ENCODE measurements at regions of chr9 and their contacts with region 1.

Region 1: GRCh38 chr9:6055213-6055612 is 39.8 kb upstream of the RANBP6 start:
- DNase-seq: no peak
- ATAC-seq: peak; percentile 92

Region 2: GRCh38 chr9:5886114-5886939 is 168.9 kb before region 1 on chr9:
- intact Hi-C with region 1: loop called in 1 of 2 experiments (anchors 2 kb)
- DNase-seq: peak; percentile 58 to 85
- ATAC-seq: peak; percentile 89

Region 3: GRCh38 chr9:6008169-6008979 is 46.8 kb before region 1 on chr9:
- intact Hi-C with region 1: no loop called
- DNase-seq: peak; percentile 94 to 98
- ATAC-seq: peak; percentile 83

Region 4: GRCh38 chr9:6126374-6126773 is 71.2 kb after region 1 on chr9:
- intact Hi-C with region 1: no loop called
- DNase-seq: no peak
- ATAC-seq: no peak

Region 5: GRCh38 chr9:6277417-6277816 is 222.2 kb after region 1 on chr9:
- intact Hi-C with region 1: no loop called
- DNase-seq: no peak
- ATAC-seq: no peak

Measured in left colon (tissue), 2 donors.